Gastrocnemius medialis (tissue), 4 donors: ENCODE measurements at regions of chr4 and their contacts with region 1.

Region 1: GRCh38 chr4:184474263-184475095 is at the start of gene IRF2:
- DNase-seq: peak; percentile 97
- ATAC-seq: peak; percentile 77
- H3K4me3 ChIP-seq: peak within 1 kb of the TSS; percentile 83 to 98 (median 92)
- H3K27ac ChIP-seq: peak within 1 kb of the TSS; percentile 96 to 100 (median 98)
- H3K4me1 ChIP-seq: peaks cover 51 to 54% of the 10 kb centered on the region in 2 donors
- H3K27me3 ChIP-seq: no peaks in the 10 kb centered on the region
- CTCF ChIP-seq: peak in 3 of 5 experiments; percentile 7 to 44 (median 36)
- POLR2A ChIP-seq: peak; percentile 96 to 97
- total RNA-seq, gene IRF2: 20.9 to 37.1 (median 32.8) TPM

Region 2: DNA sequence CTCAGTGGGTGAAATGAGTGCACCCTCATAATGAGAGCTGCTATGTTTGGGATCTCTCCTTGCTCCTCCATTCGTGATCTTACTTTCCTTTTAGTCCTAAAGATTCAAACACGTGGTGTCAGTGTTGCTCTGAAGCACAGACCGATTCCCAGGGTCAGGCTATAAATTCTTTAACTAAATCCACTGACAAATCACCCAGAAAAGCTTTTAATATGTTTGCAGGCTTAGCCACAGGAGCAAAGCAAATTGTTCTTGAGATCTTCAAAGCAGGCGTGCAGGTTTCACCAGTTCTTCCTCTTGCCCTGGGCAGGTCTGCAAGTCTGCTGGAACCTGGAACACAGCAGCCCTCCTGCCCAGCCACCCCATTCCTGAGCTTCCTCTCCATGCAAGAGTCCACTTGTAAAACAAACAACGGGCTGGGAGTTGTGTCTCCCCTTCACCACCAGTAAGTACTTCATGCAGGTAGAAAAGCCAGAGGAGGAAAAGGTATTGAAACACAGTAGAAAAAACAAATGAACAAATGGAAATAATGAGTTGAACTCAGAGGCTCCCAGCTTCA is 186.7 kb before region 1 on chr4:
- in situ Hi-C with region 1: no loop called
- intact Hi-C with region 1: loop called (anchors 2 kb)
- DNase-seq: no peak
- ATAC-seq: peak; percentile 91 to 93
- H3K4me3 ChIP-seq: no peak overlapping the region
- H3K27ac ChIP-seq: peak overlapping the region in 2 of 4 donors; percentile 25
- H3K4me1 ChIP-seq: peaks cover 2 to 8% of the 10 kb centered on the region in 2 donors
- H3K27me3 ChIP-seq: no peaks in the 10 kb centered on the region
- CTCF ChIP-seq: peak; percentile 36 to 46 (median 44)
- POLR2A ChIP-seq: no peak

Region 3: DNA sequence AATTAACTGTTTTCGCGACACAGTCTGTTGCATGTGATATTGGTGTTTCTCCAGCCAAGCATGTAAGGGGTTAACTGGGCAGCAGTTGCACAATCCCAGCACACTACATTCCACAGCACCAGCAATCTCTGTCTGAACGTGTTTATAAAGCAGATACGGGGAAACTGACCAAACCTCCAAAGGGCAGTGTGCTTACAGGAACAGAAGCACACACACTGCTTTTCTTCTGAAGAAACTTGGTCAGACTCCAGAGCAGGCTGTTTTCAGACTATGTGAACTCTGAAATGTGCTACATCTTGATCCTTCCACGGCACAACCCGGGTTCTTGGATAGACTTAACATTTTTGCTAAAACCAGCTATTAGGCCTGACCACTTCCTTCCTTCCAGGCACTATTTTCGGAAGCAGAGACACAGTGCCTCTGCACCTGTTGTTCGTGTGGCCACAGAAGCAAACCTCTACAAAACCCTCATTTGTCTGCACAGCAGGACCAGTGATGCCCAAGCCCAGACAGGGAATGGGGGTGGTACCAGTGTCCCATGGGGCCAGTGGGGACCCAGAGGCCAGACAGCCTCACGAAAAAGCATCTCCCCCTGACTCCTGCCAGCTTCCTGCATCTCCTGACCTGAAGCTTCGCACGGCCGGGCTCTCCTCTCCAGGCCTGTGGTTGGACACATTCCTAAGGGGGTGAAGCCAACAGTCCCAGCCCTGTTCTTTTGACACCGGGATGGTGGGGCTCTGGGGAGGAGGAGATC is 90.2 kb before region 1 on chr4:
- in situ Hi-C with region 1: no loop called
- intact Hi-C with region 1: loop called (anchors 2 kb)
- DNase-seq: peak in 1 of 2 donors; percentile 41
- ATAC-seq: peak; percentile 17 to 42
- H3K4me3 ChIP-seq: peak overlapping the region; percentile 16 to 47 (median 26)
- H3K27ac ChIP-seq: peak overlapping the region; percentile 78 to 89 (median 83)
- H3K4me1 ChIP-seq: peaks cover 57 to 58% of the 10 kb centered on the region in 2 donors
- H3K27me3 ChIP-seq: no peaks in the 10 kb centered on the region
- CTCF ChIP-seq: no peak
- POLR2A ChIP-seq: peak in 1 of 2 donors; percentile 27

Region 4: DNA sequence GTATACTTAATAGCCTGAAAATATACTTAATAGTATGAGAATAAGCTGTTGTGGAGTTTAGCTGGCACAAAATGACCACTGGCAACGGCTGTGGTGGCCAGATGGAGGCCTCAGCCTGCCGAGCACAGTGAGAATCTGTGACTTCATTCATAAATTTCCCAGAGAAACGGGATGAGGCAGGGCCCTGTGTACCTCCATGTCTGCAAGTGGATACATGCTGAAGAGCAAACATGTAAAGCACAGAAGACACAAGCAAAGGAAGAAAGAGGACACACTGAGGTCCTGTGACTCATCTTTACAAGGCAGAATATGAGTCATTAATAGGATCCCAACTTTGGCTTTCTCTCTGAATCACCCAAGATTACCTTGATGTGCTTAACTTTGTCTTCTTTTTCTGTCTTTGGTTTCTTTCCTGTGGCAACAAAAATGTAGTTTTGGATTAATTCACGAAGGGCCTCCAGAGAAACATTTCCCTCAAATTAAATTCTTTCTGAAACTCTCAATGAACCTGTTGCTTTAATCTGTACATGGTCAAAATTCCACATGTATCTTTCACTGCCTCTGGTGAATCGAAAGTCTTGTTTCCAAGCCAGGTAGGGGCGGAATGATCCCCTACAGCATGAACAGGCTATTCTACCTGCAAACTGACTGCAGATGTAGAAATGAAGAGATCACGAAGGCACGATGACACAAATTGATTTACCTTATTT is 56.5 kb before region 1 on chr4:
- in situ Hi-C with region 1: no loop called
- intact Hi-C with region 1: loop called (anchors 5 kb)
- DNase-seq: no peak
- ATAC-seq: peak; percentile 97 to 98
- H3K4me3 ChIP-seq: peak overlapping the region in 1 of 4 donors; percentile 26
- H3K27ac ChIP-seq: peak overlapping the region; percentile 41 to 81 (median 68)
- H3K4me1 ChIP-seq: peaks cover 23 to 36% of the 10 kb centered on the region in 2 donors
- H3K27me3 ChIP-seq: no peaks in the 10 kb centered on the region
- CTCF ChIP-seq: no peak
- POLR2A ChIP-seq: no peak

Region 5: GRCh38 chr4:184448821-184449220 is 25.7 kb before region 1 on chr4:
- in situ Hi-C with region 1: no loop called
- intact Hi-C with region 1: no loop called
- DNase-seq: peak; percentile 60 to 71
- ATAC-seq: peak; percentile 88 to 91
- H3K4me3 ChIP-seq: peak overlapping the region; percentile 54 to 66 (median 54)
- H3K27ac ChIP-seq: peak overlapping the region; percentile 65 to 88 (median 87)
- H3K4me1 ChIP-seq: peaks cover 91 to 96% of the 10 kb centered on the region in 2 donors
- H3K27me3 ChIP-seq: no peaks in the 10 kb centered on the region
- CTCF ChIP-seq: no peak
- POLR2A ChIP-seq: no peak

Region 6: GRCh38 chr4:184825896-184826690 is 351.6 kb after region 1 on chr4 and contains the start of gene ACSL1:
- in situ Hi-C with region 1: no loop called
- intact Hi-C with region 1: loop called (anchors 10 kb)
- DNase-seq: peak; percentile 80 to 91
- ATAC-seq: peak; percentile 74 to 76
- H3K4me3 ChIP-seq: peak within 1 kb of the TSS; percentile 64 to 91 (median 73)
- H3K27ac ChIP-seq: peak within 1 kb of the TSS; percentile 97 to 100 (median 98)
- H3K4me1 ChIP-seq: peaks cover 36 to 42% of the 10 kb centered on the region in 2 donors
- H3K27me3 ChIP-seq: no peaks in the 10 kb centered on the region
- CTCF ChIP-seq: no peak
- POLR2A ChIP-seq: peak; percentile 99
- total RNA-seq, gene ACSL1: 591 to 2,181 (median 1,316) TPM